ENCODE measurements at regions of chr14 and their contacts with region 1.

Region 1: DNA sequence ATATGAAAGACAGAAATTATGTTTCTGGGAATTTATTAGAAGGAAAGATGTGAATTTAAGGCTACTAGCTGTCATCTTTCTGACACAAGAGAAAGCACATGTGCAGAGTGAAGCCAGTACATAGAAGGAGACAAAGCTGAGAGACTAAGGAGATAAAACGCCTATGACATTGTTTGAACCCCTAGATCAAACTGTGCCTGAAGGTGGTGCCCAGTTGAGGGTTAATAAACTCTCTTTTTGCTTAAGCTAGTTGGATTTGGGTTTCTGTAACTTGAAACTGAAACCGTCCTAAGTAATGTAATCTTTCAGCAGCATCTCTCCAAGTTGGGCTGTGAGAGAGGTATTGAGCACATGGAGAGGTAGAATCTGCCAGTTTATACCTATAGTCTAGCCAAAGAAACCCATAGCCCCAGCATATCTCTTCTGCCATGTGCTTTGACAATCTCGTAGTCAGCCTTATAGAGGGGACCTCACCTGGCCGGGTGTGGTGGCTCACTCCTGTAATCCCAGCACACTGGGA is 84.2 kb downstream of the LRRC74A start:
- DNase-seq: no peak
- ATAC-seq: no peak
- H3K4me3 ChIP-seq: no peak overlapping the region
- H3K4me1 ChIP-seq: peaks cover 8% of the 10 kb centered on the region
- CTCF ChIP-seq: no peak

Region 2: DNA sequence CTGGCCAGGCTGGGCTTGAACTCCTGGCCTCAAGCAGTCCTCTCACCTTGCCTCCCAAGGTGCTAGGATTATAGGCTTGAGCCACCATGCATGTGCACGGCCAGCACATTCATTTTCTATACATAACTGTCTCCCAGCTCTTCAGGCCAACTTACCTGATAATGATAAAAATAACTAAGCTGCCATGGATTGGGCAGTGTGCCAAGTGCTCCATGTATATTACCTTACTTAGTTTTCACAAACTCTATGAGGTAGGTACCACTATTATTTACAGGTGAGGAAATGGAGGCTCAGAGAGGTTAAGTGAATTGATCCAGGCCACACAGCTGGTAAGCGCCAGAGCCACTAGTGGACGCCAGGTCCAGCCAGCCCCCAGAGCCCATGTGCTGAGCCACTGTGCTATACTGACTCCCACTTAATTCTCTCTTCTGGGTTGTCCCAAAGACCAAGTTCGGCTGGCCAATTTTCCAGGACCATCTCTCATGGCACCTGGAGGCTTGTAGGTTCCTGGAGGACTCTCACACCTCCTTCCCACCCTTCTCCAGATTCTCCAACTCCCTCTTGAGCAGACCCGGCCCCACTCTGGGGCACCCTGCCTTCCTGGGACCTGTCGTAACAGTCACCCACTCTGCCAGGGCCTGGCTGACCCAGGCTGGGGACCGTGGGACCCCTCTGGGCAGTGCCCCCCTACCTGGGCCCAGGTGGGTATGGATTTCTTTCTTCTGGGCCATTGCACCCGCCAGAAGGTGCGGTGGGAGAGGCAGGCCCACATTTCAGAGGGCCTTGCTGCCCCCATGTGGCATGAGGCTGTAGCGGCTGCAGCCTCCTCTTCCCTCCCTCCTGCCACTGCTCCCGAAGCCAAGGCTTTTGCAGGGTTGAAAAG is 157.4 kb after region 1 on chr14:
- intact Hi-C with region 1: loop called in 1 of 2 experiments (anchors 5 kb)
- DNase-seq: peak; percentile 63 to 82 (median 79)
- ATAC-seq: peak; percentile 87
- H3K4me3 ChIP-seq: no peak overlapping the region
- H3K4me1 ChIP-seq: no peaks in the 10 kb centered on the region
- CTCF ChIP-seq: peak; percentile 74

Measured in mucosa of descending colon (tissue), 3 donors.